K562 (cell line): ENCODE measurements at regions of chr7 and their contacts with region 1.

Region 1: GRCh38 chr7:136166521-136166920 is 189.4 kb upstream of the MTPN start:
- DNase-seq: no peak
- ATAC-seq: peak; percentile 14; the same call in 1 of the 3 replicates
- H3K4me3 ChIP-seq: no peak overlapping the region
- H3K27ac ChIP-seq: no peak overlapping the region
- H3K4me1 ChIP-seq: no peaks in the 10 kb centered on the region
- H3K27me3 ChIP-seq: no peaks in the 10 kb centered on the region
- CTCF ChIP-seq: no peak
- EP300 ChIP-seq: no peak
- POLR2A ChIP-seq: no peak
- RAD21 ChIP-seq: no peak

Region 2: GRCh38 chr7:136150311-136150710 is 16.2 kb before region 1 on chr7:
- CTCF ChIA-PET with region 1: no interaction called
- POLR2A ChIA-PET with region 1: interaction called, 22 read pairs
- in situ Hi-C with region 1: no loop called
- intact Hi-C with region 1: no loop called
- DNase-seq: no peak
- ATAC-seq: no peak; the same call in 2 of the 3 replicates
- H3K4me3 ChIP-seq: no peak overlapping the region
- H3K27ac ChIP-seq: no peak overlapping the region
- H3K4me1 ChIP-seq: no peaks in the 10 kb centered on the region
- H3K27me3 ChIP-seq: no peaks in the 10 kb centered on the region
- CTCF ChIP-seq: no peak
- EP300 ChIP-seq: no peak
- POLR2A ChIP-seq: no peak
- RAD21 ChIP-seq: no peak